ENCODE measurements at regions of chr2 and their contacts with region 1.

Region 1: GRCh38 chr2:96856776-96857673 is 791 bp downstream of the ANKRD39 start:
- DNase-seq: peak in 1 of 3 donors; percentile 64
- ATAC-seq: peak in 1 of 2 donors; percentile 1
- H3K4me3 ChIP-seq: peak overlapping the region; percentile 63
- H3K27ac ChIP-seq: peak overlapping the region; percentile 87
- H3K4me1 ChIP-seq: peaks cover 4% of the 10 kb centered on the region
- H3K27me3 ChIP-seq: no peaks in the 10 kb centered on the region

Region 2: DNA sequence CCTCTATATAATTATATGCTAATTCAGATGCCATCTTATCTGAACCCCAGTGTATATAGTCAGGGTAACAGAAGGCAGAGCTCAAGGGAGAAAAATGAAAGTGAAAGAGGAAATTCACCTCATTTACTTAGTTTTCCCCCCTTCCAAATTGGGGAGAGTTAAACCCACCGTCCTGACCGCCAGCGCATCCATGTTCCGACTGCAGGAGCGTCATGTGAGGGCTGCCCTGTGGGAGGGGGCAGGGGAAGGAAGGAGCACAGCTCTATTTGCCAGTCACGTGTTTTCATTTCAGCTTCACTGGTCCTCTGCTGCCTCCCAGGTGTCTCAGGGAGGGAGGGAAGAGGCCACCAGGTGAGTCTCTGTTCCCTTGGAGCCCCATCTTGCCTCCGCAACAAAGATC is 83.1 kb before region 1 on chr2:
- intact Hi-C with region 1: no loop called
- DNase-seq: no peak
- ATAC-seq: no peak
- H3K4me3 ChIP-seq: no peak overlapping the region
- H3K27ac ChIP-seq: no peak overlapping the region
- H3K4me1 ChIP-seq: peaks cover 3% of the 10 kb centered on the region
- H3K27me3 ChIP-seq: no peaks in the 10 kb centered on the region

Region 3: DNA sequence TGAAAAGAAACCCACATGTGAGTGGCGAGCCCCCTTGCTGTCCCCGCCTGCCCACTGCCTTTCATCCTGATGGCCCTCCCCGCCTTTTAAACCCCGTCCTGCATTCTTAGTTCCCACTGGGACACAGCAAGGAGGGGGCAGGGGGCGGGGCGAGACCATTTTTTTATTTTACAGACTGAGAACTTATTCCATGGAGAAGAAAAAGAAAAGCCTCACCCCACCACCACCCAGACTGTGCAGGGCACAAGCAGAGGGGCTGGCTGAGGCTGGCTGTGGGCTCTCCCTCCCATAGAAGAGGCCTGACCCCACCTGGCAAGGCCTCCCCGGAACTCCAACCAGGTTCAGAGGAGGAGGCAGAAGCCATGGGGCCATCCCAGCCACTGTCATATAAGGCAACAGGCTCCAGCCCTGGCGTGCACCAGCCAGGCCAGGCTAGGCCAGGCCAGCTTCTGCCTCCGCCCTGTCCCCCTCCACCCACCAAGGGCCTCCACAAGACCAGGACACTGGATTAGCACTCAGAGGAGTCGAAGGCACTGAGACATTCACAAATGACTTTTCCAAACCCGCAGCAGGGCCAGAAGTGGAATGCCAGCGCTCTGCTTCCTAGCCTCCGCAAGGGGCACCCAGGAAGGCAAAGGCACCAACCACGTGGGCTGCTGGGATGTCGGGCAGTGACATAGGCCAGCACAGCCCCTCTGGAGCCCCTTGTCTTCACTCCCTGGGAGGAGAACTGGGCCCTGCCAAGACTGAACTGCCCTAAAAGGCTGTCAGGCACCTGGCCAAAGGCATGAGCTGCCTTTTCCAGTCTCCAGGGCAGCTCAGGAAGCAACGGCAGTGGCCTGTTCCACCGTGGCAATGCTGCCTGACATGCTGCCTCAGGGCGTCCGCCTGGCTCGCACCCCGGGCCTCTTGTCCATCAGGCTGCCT is 50.4 kb after region 1 on chr2:
- intact Hi-C with region 1: loop called in 1 of 4 experiments (anchors 10 kb)
- DNase-seq: peak; percentile 90 to 95 (median 93)
- ATAC-seq: peak; percentile 96
- H3K4me3 ChIP-seq: no peak overlapping the region
- H3K27ac ChIP-seq: peak overlapping the region; percentile 80
- H3K4me1 ChIP-seq: peaks cover 7% of the 10 kb centered on the region
- H3K27me3 ChIP-seq: no peaks in the 10 kb centered on the region

Region 4: GRCh38 chr2:96933305-96934181 is 76.5 kb after region 1 on chr2:
- intact Hi-C with region 1: no loop called
- DNase-seq: peak in 1 of 3 donors; percentile 15
- ATAC-seq: no peak
- H3K4me3 ChIP-seq: no peak overlapping the region
- H3K27ac ChIP-seq: no peak overlapping the region
- H3K4me1 ChIP-seq: no peaks in the 10 kb centered on the region
- H3K27me3 ChIP-seq: no peaks in the 10 kb centered on the region

Region 5: DNA sequence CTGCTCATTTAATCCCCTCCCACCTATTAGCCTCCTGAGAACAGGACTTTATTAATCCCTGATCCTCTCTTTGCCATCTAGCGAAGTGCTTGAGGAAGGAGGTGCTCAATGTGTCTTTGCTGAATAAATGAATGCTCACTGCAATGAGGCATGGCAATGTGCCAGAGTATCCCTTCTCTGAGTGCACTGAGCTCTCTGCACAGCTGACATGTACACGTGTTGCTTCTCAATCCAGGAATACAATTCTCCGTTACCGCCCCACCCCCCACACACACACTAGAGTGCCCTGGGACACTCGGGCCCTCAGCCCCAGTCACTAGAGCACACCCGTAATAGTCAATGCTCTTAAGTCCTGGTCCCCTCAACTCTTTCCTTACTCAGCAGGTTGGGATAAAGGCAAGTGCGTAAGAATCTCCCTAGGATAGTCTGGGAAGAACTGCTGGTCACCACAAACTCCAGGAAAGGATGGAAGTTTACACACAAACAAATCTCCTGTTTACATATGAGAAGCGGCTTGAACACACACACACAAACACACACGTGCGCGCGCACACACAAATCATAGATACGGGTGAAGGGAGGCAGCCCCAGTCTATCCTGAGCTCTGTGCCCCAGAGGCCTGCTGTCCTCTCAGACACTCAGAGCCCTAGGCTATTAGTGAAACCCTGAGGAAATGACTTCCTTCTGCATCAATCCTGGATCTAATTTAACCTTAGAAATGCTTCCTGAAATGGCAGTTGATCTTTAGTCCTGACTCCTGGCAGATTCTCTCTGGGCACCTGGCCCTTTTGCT is 88.2 kb after region 1 on chr2:
- intact Hi-C with region 1: loop called (anchors 2 to 5 kb)
- DNase-seq: peak in 1 of 3 donors; percentile 19
- ATAC-seq: no peak
- H3K4me3 ChIP-seq: no peak overlapping the region
- H3K27ac ChIP-seq: no peak overlapping the region
- H3K4me1 ChIP-seq: no peaks in the 10 kb centered on the region
- H3K27me3 ChIP-seq: no peaks in the 10 kb centered on the region

Region 6: GRCh38 chr2:96951093-96951654 is 94.1 kb after region 1 on chr2:
- intact Hi-C with region 1: loop called (anchors 2 to 5 kb)
- DNase-seq: peak; percentile 67 to 89 (median 89)
- ATAC-seq: peak; percentile 79 to 80
- H3K4me3 ChIP-seq: no peak overlapping the region
- H3K27ac ChIP-seq: no peak overlapping the region
- H3K4me1 ChIP-seq: peaks cover 7% of the 10 kb centered on the region
- H3K27me3 ChIP-seq: no peaks in the 10 kb centered on the region

Region 7: DNA sequence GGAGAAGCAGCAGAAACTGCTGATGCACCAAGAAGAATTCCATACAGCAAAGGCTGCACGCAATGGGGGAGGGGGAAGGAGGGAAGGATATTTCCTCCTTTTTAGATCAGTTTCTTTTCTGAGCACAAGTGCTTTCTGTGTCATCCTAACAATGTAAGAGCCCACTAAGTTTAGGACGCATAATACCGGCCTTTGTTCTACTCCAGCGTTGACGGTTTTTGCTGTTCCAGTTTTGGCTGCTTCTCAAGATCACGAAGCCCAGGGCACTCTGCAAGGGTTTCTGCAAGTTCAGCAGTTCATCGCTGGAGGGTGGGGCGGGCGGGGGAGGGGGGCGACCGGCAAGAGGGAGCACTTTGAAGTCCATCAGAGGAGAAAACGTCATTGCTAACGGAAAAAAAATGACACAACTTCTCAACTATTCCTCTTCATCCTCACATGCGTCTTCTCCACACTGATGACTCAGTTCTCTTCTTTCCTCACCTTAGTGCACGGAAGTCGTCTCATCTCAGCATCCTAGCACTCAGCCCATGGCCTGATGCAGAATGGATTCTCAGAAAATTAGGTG is 120.7 kb after region 1 on chr2:
- intact Hi-C with region 1: no loop called
- DNase-seq: no peak
- ATAC-seq: peak in 1 of 2 donors; percentile 31
- H3K4me3 ChIP-seq: no peak overlapping the region
- H3K27ac ChIP-seq: no peak overlapping the region
- H3K4me1 ChIP-seq: no peaks in the 10 kb centered on the region
- H3K27me3 ChIP-seq: no peaks in the 10 kb centered on the region

Measured in right cardiac atrium (tissue), 5 donors.